ENCODE measurements at regions of chr3 and their contacts with region 1.

Region 1: DNA sequence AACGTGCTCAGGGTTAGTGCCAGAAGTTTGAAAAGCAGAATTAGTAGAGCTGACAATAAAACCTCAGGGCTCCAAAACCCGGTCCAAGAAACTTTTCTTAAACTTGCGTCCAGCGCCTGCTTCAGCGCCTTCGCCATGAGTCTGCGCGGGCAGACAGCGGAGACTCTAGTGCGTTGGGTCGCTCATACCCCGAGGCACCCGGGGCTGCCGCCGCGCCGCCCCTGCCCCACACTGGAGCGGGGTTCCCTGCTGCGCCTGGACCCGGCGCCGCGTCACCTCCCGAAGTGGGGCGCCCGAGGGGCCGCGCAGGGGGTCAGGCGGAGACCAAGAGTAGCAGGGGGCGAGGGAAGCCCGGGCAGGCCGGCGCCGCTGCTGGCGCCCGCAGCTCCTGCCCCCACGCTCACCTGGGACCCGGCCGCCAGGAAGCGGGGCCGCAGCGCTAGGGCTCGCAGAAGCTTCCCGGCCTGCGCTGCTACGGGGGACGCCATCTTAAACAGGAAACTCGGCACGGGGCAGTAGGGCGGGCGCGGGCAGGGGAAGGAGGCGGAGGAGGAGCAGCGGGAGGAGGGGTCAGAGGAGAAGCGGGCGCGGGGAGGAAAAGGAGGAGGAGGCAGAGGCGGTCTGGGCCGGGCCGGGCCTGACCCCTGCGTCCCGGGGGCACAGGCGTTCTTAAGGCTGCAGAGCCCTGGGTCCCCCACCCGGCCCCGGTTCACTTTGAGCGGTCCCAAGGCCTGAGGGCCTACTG is at the start of gene SUCLG2:
- DNase-seq: peak; percentile 80
- H3K4me3 Mint-ChIP-seq: peak within 1 kb of the TSS; percentile 78
- H3K27ac Mint-ChIP-seq: peak within 1 kb of the TSS; percentile 76
- H3K4me1 Mint-ChIP-seq: peaks cover 51% of the 10 kb centered on the region
- H3K27me3 Mint-ChIP-seq: peaks cover 4% of the 10 kb centered on the region
- total RNA-seq, gene SUCLG2: 36.3 and 38.1 TPM in 2 replicates

Region 2: DNA sequence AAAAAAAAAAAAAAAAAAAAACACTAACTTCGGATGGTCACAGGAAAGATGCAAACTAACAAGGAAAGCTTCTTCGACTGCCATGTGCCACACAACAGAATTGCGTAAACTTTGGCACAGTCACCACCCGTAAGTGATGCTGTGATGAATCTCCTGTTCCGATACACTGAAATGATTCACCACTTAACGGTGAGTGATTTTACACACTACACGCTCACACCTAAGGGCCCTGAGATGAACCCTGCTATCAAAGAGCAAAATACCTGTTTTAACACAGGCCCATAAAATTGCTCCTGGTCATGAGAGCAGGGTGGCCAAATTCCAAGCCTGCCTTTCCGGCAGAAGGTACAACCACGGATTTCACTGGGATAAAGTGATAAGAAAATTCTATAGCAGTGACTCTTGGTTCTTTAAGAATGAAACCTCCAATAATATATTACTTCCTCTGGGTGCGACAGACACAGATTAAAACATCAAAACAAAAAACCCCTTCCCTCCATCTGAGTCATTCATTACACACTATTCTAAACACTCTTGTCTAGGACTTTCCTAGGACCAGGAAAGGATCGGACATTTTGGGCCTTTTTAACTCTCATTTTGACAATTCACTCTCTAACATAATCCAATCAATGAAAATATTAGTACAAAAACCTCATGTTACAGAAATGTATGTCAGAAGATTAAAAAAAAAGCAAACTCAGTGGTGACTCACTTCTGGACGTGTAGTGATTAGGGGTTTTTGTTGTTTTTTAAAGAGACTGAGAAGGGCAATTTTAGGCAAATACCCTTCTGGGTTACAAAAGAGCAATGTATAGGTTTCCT is 1181.7 kb before region 1 on chr3:
- intact Hi-C with region 1: loop called (anchors 10 kb)
- DNase-seq: peak; percentile 41
- H3K4me3 Mint-ChIP-seq: peak overlapping the region; percentile 67
- H3K27ac Mint-ChIP-seq: no peak overlapping the region
- H3K4me1 Mint-ChIP-seq: peaks cover 66% of the 10 kb centered on the region
- H3K27me3 Mint-ChIP-seq: no peaks in the 10 kb centered on the region

Region 3: GRCh38 chr3:67083277-67083676 is 571.0 kb before region 1 on chr3:
- intact Hi-C with region 1: loop called (anchors 10 kb)
- DNase-seq: peak; percentile 28
- H3K4me3 Mint-ChIP-seq: no peak overlapping the region
- H3K27ac Mint-ChIP-seq: peak overlapping the region; percentile 55
- H3K4me1 Mint-ChIP-seq: peaks cover 20% of the 10 kb centered on the region
- H3K27me3 Mint-ChIP-seq: peaks cover 3% of the 10 kb centered on the region

Region 4: GRCh38 chr3:67384760-67385397 is 269.4 kb before region 1 on chr3:
- intact Hi-C with region 1: loop called (anchors 1 kb)
- DNase-seq: peak; percentile 14
- H3K4me3 Mint-ChIP-seq: no peak overlapping the region
- H3K27ac Mint-ChIP-seq: no peak overlapping the region
- H3K4me1 Mint-ChIP-seq: peaks cover 29% of the 10 kb centered on the region
- H3K27me3 Mint-ChIP-seq: no peaks in the 10 kb centered on the region

Region 5: DNA sequence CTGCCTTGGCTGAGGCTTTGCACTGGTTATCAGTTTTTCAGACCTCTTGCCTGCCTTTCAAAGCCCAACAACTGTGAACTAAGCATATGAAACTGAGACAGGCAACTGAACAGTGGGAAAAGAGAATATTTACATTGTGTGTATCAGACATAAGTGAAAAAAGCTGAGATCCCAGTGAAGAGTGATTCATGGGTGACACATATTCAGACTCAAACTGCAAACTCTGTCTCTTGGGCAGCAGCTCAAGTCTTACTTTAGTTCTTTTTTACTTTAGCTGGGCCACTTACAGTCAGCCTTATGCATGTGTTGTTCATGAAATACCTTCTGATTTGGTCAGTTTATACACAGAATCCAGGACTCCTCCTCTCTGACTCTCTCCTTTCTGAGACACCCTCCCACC is 19.0 kb before region 1 on chr3:
- intact Hi-C with region 1: loop called (anchors 1 kb)
- DNase-seq: no peak
- H3K4me3 Mint-ChIP-seq: no peak overlapping the region
- H3K27ac Mint-ChIP-seq: peak overlapping the region; percentile 51
- H3K4me1 Mint-ChIP-seq: peaks cover 23% of the 10 kb centered on the region
- H3K27me3 Mint-ChIP-seq: no peaks in the 10 kb centered on the region

Region 6: GRCh38 chr3:67674055-67674454 is 19.8 kb after region 1 on chr3:
- intact Hi-C with region 1: no loop called
- DNase-seq: no peak
- H3K4me3 Mint-ChIP-seq: no peak overlapping the region
- H3K27ac Mint-ChIP-seq: no peak overlapping the region
- H3K4me1 Mint-ChIP-seq: peaks cover 11% of the 10 kb centered on the region
- H3K27me3 Mint-ChIP-seq: peaks cover 3% of the 10 kb centered on the region